Caco-2 (cell line): ENCODE measurements at regions of chr5 and their contacts with region 1.

Region 1: DNA sequence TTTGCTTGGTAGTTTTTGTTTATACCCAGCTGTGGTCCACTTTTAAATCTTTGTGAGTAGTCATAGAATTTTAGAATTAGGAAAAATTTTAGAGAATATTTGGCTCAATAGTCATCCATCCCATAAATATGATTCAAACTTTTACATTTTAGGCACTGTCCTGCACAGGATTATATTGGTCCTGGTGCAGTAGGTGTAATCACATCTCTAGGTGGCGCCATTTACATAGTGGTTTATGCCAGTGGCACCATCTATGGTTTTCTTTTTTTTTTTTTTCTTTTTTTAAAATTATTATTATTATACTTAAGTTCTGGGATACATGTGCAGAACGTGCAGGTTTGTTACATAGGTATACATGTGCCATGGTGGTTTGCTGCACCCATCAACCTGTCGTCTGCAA is 260.7 kb upstream of the KCNN2 start:
- DNase-seq: peak in 1 of 2 experiments; percentile 30
- H3K4me3 ChIP-seq: no peak overlapping the region
- H3K4me3 Mint-ChIP-seq: no peak overlapping the region
- H3K27ac Mint-ChIP-seq: no peak overlapping the region
- H3K4me1 ChIP-seq: no peaks in the 10 kb centered on the region
- H3K4me1 Mint-ChIP-seq: no peaks in the 10 kb centered on the region
- H3K27me3 ChIP-seq: no peaks in the 10 kb centered on the region
- H3K27me3 Mint-ChIP-seq: peaks cover 8% of the 10 kb centered on the region
- CTCF ChIP-seq: peak; percentile 41 to 42

Region 2: DNA sequence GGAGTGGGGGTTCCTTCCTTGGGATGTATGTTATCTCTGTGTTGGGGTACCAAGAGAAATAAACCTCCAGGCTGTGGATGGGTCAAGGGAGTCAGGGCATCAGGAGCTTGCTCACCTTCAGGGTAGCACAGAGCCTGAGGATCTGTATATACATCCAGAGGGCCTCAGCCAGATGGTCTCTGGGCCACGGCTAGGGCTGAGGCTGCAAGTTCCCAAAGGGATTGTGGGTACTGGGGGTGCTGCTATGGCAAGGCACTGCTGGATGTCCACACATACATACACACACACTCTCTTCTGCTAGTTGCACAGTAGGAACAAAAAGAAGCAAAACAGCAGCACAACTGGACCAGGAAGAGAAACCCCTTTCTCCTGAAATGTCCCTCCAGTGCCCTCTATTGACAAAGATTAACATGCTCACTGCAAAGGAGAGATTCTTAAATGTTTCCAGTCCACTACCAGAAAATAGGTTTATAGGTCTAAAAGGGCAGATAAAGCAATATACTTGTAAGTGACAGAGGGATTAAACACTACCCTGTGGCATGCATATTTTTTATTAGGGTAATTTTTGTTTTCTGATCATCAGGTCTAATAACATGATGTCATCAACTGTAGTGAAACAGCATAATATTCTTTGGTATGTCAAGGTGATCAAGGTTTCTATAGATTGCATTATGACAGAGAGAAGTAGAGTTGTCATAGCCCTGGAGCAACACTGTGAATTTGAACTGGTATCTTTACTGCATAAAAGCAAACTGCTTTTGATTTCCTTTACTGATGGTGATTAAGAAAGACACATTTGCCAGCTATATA is 204.5 kb after region 1 on chr5:
- CTCF ChIA-PET with region 1: no interaction called
- POLR2A ChIA-PET with region 1: no interaction called
- intact Hi-C with region 1: loop called (anchors 1 kb)
- DNase-seq: peak in 1 of 2 experiments; percentile 2
- H3K4me3 ChIP-seq: no peak overlapping the region
- H3K4me3 Mint-ChIP-seq: no peak overlapping the region
- H3K27ac Mint-ChIP-seq: no peak overlapping the region
- H3K4me1 ChIP-seq: no peaks in the 10 kb centered on the region
- H3K4me1 Mint-ChIP-seq: no peaks in the 10 kb centered on the region
- H3K27me3 ChIP-seq: no peaks in the 10 kb centered on the region
- H3K27me3 Mint-ChIP-seq: peaks cover 6% of the 10 kb centered on the region
- CTCF ChIP-seq: peak; percentile 1 to 30

Region 3: DNA sequence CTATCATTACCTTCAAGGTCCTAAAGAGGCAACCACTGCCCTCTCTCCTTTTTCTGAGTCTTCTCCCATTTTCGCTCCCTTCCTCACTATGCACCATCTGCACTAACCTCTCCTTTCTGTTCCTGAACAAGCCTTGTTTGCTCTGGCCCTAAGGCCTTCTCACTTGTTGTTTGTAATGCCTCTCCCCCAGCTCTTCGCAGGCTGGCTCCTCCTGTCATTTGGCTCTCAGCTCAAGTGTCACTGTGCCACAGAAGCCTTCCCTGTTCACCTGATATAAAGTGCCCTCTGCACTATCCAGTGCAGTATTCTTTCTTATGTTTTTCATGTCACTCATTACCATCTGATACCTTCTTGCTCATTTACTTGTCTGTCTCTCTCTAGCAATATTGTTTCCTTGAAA is 564.4 kb after region 1 on chr5:
- CTCF ChIA-PET with region 1: no interaction called
- POLR2A ChIA-PET with region 1: no interaction called
- intact Hi-C with region 1: no loop called
- DNase-seq: no peak
- H3K4me3 ChIP-seq: no peak overlapping the region
- H3K4me3 Mint-ChIP-seq: no peak overlapping the region
- H3K27ac Mint-ChIP-seq: no peak overlapping the region
- H3K4me1 ChIP-seq: no peaks in the 10 kb centered on the region
- H3K4me1 Mint-ChIP-seq: no peaks in the 10 kb centered on the region
- H3K27me3 ChIP-seq: no peaks in the 10 kb centered on the region
- H3K27me3 Mint-ChIP-seq: no peaks in the 10 kb centered on the region
- CTCF ChIP-seq: no peak

Region 4: DNA sequence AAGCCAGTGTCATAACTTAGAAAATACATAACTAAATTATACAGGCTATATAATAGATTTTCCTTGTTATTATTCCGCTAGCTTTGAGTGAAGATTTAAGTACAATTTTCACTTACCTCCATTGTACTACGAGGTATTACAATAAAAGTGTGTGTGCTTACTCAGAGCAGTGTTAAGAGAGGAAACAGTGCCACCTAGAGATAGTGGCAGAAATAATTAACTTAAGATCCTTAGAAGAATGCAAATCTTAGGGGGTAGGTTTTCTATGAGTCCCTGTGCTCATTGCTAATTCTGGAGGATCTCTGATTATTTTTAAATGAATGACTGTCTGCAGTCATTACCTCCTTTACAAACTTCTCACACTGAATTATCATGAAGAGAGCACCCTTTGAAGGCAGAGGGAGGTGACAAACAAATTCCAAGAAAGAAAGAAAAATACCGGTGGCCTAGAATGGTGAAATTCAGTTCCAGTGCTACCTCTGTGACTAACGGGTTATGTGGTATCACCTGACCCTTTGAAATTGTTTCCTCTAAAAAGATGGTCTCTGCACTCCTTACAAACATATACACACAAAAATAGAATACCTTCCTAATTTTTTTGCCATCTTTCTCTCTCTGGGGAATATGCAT is 688.7 kb after region 1 on chr5:
- CTCF ChIA-PET with region 1: no interaction called
- POLR2A ChIA-PET with region 1: no interaction called
- intact Hi-C with region 1: no loop called
- DNase-seq: peak in 1 of 2 experiments; percentile 20
- H3K4me3 ChIP-seq: no peak overlapping the region
- H3K4me3 Mint-ChIP-seq: no peak overlapping the region
- H3K27ac Mint-ChIP-seq: no peak overlapping the region
- H3K4me1 ChIP-seq: peaks cover 4% of the 10 kb centered on the region; the same call in 1 of the 2 replicates
- H3K4me1 Mint-ChIP-seq: peaks cover 7% of the 10 kb centered on the region
- H3K27me3 ChIP-seq: no peaks in the 10 kb centered on the region
- H3K27me3 Mint-ChIP-seq: peaks cover 3% of the 10 kb centered on the region
- CTCF ChIP-seq: peak in 1 of 2 experiments; percentile 57